ENCODE measurements at regions of chr1 and their contacts with region 1.

Region 1: GRCh38 chr1:233257786-233258185 is 37.7 kb downstream of the PCNX2 start:
- DNase-seq: no peak
- ATAC-seq: no peak
- H3K4me3 ChIP-seq: no peak overlapping the region
- H3K27ac ChIP-seq: no peak overlapping the region
- H3K4me1 ChIP-seq: peaks cover 8% of the 10 kb centered on the region
- H3K27me3 ChIP-seq: no peaks in the 10 kb centered on the region
- CTCF ChIP-seq: no peak
- POLR2A ChIP-seq: no peak
- RAD21 ChIP-seq: no peak

Region 2: GRCh38 chr1:232393010-232393409 is 864.8 kb before region 1 on chr1:
- CTCF ChIA-PET with region 1: no interaction called
- POLR2A ChIA-PET with region 1: no interaction called
- dilution Hi-C with region 1: no loop called
- in situ Hi-C with region 1: no loop called
- intact Hi-C with region 1: no loop called
- DNase-seq: peak; percentile 32
- ATAC-seq: peak; percentile 75
- H3K4me3 ChIP-seq: no peak overlapping the region
- H3K27ac ChIP-seq: no peak overlapping the region
- H3K4me1 ChIP-seq: no peaks in the 10 kb centered on the region; the same call in 1 of the 2 replicates
- H3K27me3 ChIP-seq: no peaks in the 10 kb centered on the region
- CTCF ChIP-seq: no peak
- POLR2A ChIP-seq: no peak
- RAD21 ChIP-seq: no peak

Region 3: DNA sequence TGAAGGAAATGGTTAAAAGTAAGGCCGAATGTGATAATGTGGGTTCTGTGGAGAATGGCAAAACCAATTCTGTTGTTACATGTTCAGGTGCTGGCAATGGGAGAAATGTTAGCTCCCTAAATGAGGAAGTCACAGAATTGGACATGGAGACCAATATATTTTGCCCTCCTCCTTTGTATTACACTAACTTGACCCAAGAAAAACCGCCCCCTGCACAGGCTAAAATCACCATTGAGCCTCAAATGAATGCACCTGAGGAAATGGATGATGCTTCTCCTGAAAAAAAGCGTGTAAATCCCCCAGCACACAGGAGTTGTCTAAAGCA is 451.6 kb before region 1 on chr1:
- CTCF ChIA-PET with region 1: no interaction called
- POLR2A ChIA-PET with region 1: no interaction called
- dilution Hi-C with region 1: no loop called
- in situ Hi-C with region 1: no loop called
- intact Hi-C with region 1: no loop called
- DNase-seq: no peak
- ATAC-seq: no peak
- H3K4me3 ChIP-seq: peak overlapping the region; percentile 55
- H3K27ac ChIP-seq: no peak overlapping the region
- H3K4me1 ChIP-seq: peaks cover 4% of the 10 kb centered on the region; the same call in 1 of the 2 replicates
- H3K27me3 ChIP-seq: no peaks in the 10 kb centered on the region
- CTCF ChIP-seq: no peak
- POLR2A ChIP-seq: no peak
- RAD21 ChIP-seq: no peak

Region 4: DNA sequence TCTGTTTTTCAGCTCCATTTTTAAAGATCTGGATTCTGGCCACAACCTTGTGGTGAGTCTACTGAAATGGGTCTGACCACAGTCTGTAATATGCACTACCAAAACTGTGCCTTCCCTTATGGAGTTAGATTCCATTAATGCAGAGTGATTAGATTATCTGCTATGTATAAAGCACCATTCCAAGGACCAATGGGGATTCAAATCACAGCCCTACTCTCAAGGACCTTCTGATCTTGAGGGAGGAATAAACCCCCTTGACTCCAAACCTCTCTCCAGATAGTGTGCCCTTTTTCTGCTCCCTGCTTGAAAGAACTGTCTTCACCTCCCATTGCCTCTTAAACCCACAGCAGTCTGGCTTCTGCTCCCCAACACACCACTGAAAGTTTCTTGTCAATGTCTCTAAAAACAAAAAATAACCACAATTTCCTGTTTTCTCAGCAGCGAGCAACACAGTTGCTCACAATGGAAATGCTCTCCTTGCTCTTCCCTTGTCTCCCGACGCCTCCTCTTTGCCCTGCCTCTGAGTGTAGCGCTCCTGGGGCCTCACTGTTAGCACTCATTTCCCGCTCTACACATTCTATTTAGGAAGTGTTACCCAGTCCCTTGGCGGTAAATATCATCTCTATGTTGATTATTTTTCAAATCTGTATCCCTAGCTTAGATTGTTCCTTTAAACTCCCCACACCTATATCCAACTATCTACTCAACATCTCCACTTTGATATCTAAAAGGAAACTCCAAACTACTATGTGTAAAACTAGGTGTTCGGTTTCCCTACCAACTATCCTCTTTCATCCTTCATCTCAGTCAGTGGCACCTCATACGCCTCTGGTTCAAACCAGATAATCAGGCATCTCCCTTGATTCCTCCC is 24.2 kb after region 1 on chr1:
- CTCF ChIA-PET with region 1: no interaction called
- POLR2A ChIA-PET with region 1: no interaction called
- dilution Hi-C with region 1: no loop called
- in situ Hi-C with region 1: no loop called
- intact Hi-C with region 1: loop called (anchors 1 kb)
- DNase-seq: peak; percentile 55
- ATAC-seq: peak; percentile 72
- H3K4me3 ChIP-seq: no peak overlapping the region
- H3K27ac ChIP-seq: no peak overlapping the region
- H3K4me1 ChIP-seq: no peaks in the 10 kb centered on the region
- H3K27me3 ChIP-seq: no peaks in the 10 kb centered on the region
- CTCF ChIP-seq: no peak
- POLR2A ChIP-seq: no peak
- RAD21 ChIP-seq: no peak